ENCODE measurements at regions of chr5 and their contacts with region 1.

Region 1: DNA sequence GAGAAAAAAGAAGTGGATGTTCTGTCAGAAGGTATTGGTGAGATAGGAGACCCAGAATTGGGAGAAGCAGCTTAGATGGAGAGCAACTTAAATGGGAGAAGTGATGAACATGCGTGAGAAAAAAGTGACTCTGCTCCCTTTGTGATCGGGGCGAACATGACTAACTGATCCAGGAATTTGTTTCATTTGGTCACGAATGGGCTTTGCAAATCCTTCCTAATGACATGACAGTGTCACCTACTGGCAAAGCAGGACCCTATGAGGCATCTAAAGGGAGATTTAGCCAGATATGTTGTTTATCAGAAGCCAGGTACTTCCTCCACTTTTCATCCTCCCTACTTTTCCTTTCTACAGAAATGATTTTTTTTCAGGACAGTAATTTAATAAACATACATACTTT is 787.4 kb upstream of the RGMB start:
- DNase-seq: no peak
- H3K4me3 ChIP-seq: no peak overlapping the region
- H3K27ac ChIP-seq: no peak overlapping the region
- H3K4me1 ChIP-seq: no peaks in the 10 kb centered on the region
- H3K27me3 ChIP-seq: no peaks in the 10 kb centered on the region
- CTCF ChIP-seq: no peak
- POLR2A ChIP-seq: no peak

Region 2: GRCh38 chr5:98016771-98017170 is 30.7 kb after region 1 on chr5:
- intact Hi-C with region 1: loop called (anchors 2 kb)
- DNase-seq: no peak
- H3K4me3 ChIP-seq: no peak overlapping the region
- H3K27ac ChIP-seq: no peak overlapping the region
- H3K4me1 ChIP-seq: no peaks in the 10 kb centered on the region
- H3K27me3 ChIP-seq: no peaks in the 10 kb centered on the region
- CTCF ChIP-seq: no peak
- POLR2A ChIP-seq: no peak

Measured in vagina (tissue), 2 donors.